K562 (cell line): ENCODE measurements at regions of chr1 and their contacts with region 1.

Region 1: GRCh38 chr1:205354259-205354904 is 2.3 kb downstream of the KLHDC8A start:
- DNase-seq: peak; percentile 50 to 79 (median 72)
- ATAC-seq: peak; percentile 89
- H3K4me3 ChIP-seq: no peak overlapping the region
- H3K27ac ChIP-seq: no peak overlapping the region
- H3K4me1 ChIP-seq: peaks cover 0 to 3% of the 10 kb centered on the region in 2 experiments; a peak in 1 of 5 replicates
- H3K27me3 ChIP-seq: peaks cover 39 to 70% of the 10 kb centered on the region in 2 experiments
- CTCF ChIP-seq: peak; percentile 80 to 92 (median 86)
- EP300 ChIP-seq: no peak
- POLR2A ChIP-seq: no peak
- RAD21 ChIP-seq: peak; percentile 67 to 81

Region 2: GRCh38 chr1:205335643-205336091 is 18.7 kb before region 1 on chr1:
- CTCF ChIA-PET with region 1: interaction called, 4 read pairs
- POLR2A ChIA-PET with region 1: interaction called, 4 read pairs
- in situ Hi-C with region 1: no loop called
- intact Hi-C with region 1: loop called (anchors 1 kb)
- DNase-seq: peak; percentile 83 to 92 (median 88)
- ATAC-seq: peak; percentile 97
- H3K4me3 ChIP-seq: no peak overlapping the region
- H3K27ac ChIP-seq: no peak overlapping the region
- H3K4me1 ChIP-seq: no peaks in the 10 kb centered on the region
- H3K27me3 ChIP-seq: peaks cover 17 to 62% of the 10 kb centered on the region in 2 experiments
- CTCF ChIP-seq: peak; percentile 99 to 100 (median 99)
- EP300 ChIP-seq: no peak; the same call in 1 of the 2 replicates
- POLR2A ChIP-seq: no peak
- RAD21 ChIP-seq: peak; percentile 77 to 93

Region 3: GRCh38 chr1:205365945-205366463 is 11.6 kb after region 1 on chr1:
- CTCF ChIA-PET with region 1: no interaction called
- POLR2A ChIA-PET with region 1: no interaction called
- in situ Hi-C with region 1: no loop called
- intact Hi-C with region 1: no loop called
- DNase-seq: peak in 1 of 4 experiments; percentile 19
- ATAC-seq: no peak
- H3K4me3 ChIP-seq: no peak overlapping the region
- H3K27ac ChIP-seq: no peak overlapping the region
- H3K4me1 ChIP-seq: no peaks in the 10 kb centered on the region
- H3K27me3 ChIP-seq: peaks cover 22 to 43% of the 10 kb centered on the region in 2 experiments
- CTCF ChIP-seq: no peak
- EP300 ChIP-seq: no peak
- POLR2A ChIP-seq: no peak
- RAD21 ChIP-seq: no peak

Region 4: DNA sequence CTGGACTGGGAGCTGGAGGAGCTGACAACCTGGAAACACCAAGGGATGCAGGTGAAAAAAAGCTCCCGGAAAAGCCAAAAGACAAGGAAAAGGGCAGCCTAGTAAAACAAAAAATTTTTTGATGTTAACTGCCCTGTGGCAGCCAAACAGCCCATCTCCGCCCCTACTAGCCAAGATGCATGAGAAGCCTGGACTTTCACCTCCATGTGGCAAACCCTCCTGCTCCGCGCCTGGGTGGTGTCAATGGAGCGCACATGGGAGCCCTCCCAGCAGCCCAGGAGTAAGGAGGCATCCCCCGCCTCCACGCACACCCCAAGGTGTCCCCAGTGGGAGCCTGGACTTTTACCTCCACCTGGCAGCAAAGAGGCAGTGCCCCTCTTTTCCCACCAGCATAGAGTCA is 37.0 kb after region 1 on chr1:
- CTCF ChIA-PET with region 1: no interaction called
- POLR2A ChIA-PET with region 1: no interaction called
- in situ Hi-C with region 1: no loop called
- intact Hi-C with region 1: loop called (anchors 5 kb)
- DNase-seq: no peak
- ATAC-seq: no peak
- H3K4me3 ChIP-seq: no peak overlapping the region
- H3K27ac ChIP-seq: no peak overlapping the region
- H3K4me1 ChIP-seq: no peaks in the 10 kb centered on the region
- H3K27me3 ChIP-seq: peaks cover 16 to 26% of the 10 kb centered on the region in 2 experiments
- CTCF ChIP-seq: no peak
- EP300 ChIP-seq: no peak
- POLR2A ChIP-seq: no peak
- RAD21 ChIP-seq: no peak

Region 5: GRCh38 chr1:205430696-205431305 is 76.4 kb after region 1 on chr1:
- CTCF ChIA-PET with region 1: interaction called, 4 read pairs
- POLR2A ChIA-PET with region 1: no interaction called
- in situ Hi-C with region 1: no loop called
- intact Hi-C with region 1: loop called (anchors 10 kb)
- DNase-seq: peak; percentile 77 to 89 (median 82)
- ATAC-seq: peak; percentile 95
- H3K4me3 ChIP-seq: peak overlapping the region; percentile 46
- H3K27ac ChIP-seq: no peak overlapping the region
- H3K4me1 ChIP-seq: peaks cover 6% of the 10 kb centered on the region in 2 experiments; a peak in 4 of 5 replicates
- H3K27me3 ChIP-seq: peaks cover 21 to 60% of the 10 kb centered on the region in 2 experiments; a peak in 4 of 5 replicates
- CTCF ChIP-seq: peak; percentile 92 to 100 (median 93)
- EP300 ChIP-seq: no peak
- POLR2A ChIP-seq: no peak
- RAD21 ChIP-seq: peak; percentile 64 to 73